ENCODE measurements at regions of chr6 and their contacts with region 1.

Region 1: DNA sequence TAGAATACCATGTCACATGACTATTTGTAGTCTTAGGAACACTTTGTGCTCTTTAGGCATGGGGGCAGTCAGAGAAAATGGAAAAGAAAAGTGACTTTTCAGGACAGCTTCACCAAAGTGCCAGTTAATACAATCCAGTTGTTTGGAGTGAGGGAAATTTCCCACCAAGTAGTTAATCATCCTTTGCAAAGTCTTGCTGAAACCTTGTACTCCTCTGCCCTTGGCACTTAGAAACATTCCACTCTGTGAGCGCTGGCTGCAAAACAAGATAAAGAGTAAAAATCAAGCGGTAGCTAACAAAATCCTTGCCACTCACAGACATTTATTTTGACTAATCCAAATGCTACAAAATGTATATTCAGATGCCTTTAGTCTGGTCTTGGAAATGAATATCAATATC is 229.2 kb upstream of the HSF2 start:
- DNase-seq: no peak
- H3K4me3 ChIP-seq: no peak overlapping the region
- H3K27ac ChIP-seq: no peak overlapping the region
- H3K27me3 ChIP-seq: no peaks in the 10 kb centered on the region
- CTCF ChIP-seq: no peak

Region 2: DNA sequence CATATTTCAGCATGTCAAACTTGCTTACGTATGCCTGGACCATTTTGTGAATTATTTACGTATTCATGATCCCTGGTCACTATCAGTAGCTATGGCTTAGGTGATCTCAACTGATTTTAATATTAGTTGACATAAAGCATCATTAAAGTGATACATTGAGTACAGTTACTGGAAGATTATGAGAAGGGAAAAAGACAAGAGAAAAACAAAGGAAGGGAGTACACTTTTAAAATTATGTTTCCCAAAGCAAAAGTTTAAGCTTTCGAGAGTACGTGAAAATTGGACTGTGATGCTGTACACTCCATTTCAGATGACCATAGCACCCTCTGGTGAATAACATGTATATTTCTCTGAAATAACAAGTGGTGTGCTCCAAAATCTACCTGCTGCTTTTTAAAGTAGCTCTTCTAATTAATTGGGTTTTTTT is 14.1 kb after region 1 on chr6:
- CTCF ChIA-PET with region 1: interaction called, 11 read pairs
- POLR2A ChIA-PET with region 1: no interaction called
- DNase-seq: peak; percentile 11
- H3K4me3 ChIP-seq: peak overlapping the region; percentile 23; the same call in 1 of the 2 replicates
- H3K27ac ChIP-seq: no peak overlapping the region
- H3K27me3 ChIP-seq: no peaks in the 10 kb centered on the region
- CTCF ChIP-seq: peak; percentile 54

Region 3: GRCh38 chr6:122393351-122393896 is 223.2 kb after region 1 on chr6:
- CTCF ChIA-PET with region 1: no interaction called
- POLR2A ChIA-PET with region 1: no interaction called
- DNase-seq: no peak
- H3K4me3 ChIP-seq: no peak overlapping the region
- H3K27ac ChIP-seq: no peak overlapping the region
- H3K27me3 ChIP-seq: peaks cover 3% of the 10 kb centered on the region
- CTCF ChIP-seq: no peak

Region 4: DNA sequence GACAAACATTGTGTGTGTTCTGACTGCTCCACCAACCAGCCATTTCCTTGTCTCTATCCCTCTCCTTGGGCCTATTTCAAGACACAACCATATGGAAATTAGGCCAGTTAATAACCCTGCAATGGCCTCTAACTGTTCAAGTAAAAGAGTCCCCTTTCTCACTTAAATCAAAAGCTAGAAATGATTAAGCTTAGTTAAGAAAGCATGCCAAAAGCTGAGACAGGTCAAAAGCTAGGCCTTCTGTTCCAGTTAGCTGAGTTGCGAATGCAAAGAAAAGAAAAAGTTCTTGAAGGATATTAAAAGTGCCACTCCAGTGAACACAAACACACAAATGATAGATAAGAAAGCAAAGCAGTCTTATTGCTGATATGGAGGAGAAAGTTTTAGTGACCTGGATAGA is 278.8 kb after region 1 on chr6:
- CTCF ChIA-PET with region 1: no interaction called
- POLR2A ChIA-PET with region 1: no interaction called
- DNase-seq: no peak
- H3K4me3 ChIP-seq: no peak overlapping the region
- H3K27ac ChIP-seq: no peak overlapping the region
- H3K27me3 ChIP-seq: no peaks in the 10 kb centered on the region
- CTCF ChIP-seq: no peak

Measured in AG04450 (cell line).